Heart left ventricle (tissue), 16 donors: ENCODE measurements at regions of chr9 and their contacts with region 1.

Region 1: DNA sequence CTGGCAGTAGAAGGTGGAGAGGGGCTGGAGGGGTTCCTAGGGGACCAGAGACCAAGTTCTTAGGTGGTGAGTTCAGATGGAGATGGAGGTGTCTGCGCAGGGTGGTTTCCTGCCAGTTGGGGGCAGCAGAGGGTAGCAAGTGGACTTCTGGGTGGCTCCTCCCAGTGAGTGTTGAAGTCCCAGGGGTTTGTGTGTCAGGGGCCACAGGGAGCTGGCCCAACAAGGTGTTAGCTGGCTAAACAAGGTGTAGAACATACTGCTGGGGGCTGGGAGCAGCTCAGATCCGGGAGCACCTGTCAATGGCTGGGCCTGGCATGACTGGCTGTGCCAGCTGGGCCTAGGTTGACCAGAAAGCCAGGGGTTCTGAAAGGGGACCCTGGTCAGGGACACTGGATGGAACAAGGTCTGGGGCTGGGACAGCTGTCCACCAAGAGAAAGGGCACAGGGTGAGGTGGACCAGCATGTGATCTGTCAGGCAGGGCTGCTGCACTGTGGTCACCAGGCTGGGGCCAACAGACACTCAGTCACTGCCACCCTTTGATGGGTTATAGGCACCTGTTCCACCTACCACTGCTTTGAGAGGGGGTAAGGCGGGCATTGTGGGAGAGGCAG is 35.6 kb downstream of the DAB2IP start:
- DNase-seq: peak in 4 of 5 donors; percentile 71 to 84 (median 76)
- ATAC-seq: peak; percentile 56 to 72 (median 62)
- H3K4me3 ChIP-seq: no peak overlapping the region
- H3K27ac ChIP-seq: peak overlapping the region in 4 of 12 donors; percentile 14 to 42 (median 36)
- H3K4me1 ChIP-seq: peaks cover 3 to 68% (median 28%) of the 10 kb centered on the region in 12 donors
- H3K27me3 ChIP-seq: no peaks in the 10 kb centered on the region
- CTCF ChIP-seq: peak; percentile 70 to 91 (median 82)
- POLR2A ChIP-seq: no peak

Region 2: GRCh38 chr9:121634329-121635261 is 52.4 kb before region 1 on chr9:
- intact Hi-C with region 1: loop called in 2 of 10 experiments (anchors 5 kb)
- DNase-seq: no peak
- ATAC-seq: peak; percentile 60 to 79 (median 64)
- H3K4me3 ChIP-seq: no peak overlapping the region
- H3K27ac ChIP-seq: peak overlapping the region in 5 of 12 donors; percentile 6 to 66 (median 34)
- H3K4me1 ChIP-seq: peaks cover 15 to 60% (median 43%) of the 10 kb centered on the region in 12 donors
- H3K27me3 ChIP-seq: no peaks in the 10 kb centered on the region
- CTCF ChIP-seq: peak; percentile 35 to 74 (median 62)
- POLR2A ChIP-seq: no peak